ENCODE measurements at regions of chr4 and their contacts with region 1.

Region 1: DNA sequence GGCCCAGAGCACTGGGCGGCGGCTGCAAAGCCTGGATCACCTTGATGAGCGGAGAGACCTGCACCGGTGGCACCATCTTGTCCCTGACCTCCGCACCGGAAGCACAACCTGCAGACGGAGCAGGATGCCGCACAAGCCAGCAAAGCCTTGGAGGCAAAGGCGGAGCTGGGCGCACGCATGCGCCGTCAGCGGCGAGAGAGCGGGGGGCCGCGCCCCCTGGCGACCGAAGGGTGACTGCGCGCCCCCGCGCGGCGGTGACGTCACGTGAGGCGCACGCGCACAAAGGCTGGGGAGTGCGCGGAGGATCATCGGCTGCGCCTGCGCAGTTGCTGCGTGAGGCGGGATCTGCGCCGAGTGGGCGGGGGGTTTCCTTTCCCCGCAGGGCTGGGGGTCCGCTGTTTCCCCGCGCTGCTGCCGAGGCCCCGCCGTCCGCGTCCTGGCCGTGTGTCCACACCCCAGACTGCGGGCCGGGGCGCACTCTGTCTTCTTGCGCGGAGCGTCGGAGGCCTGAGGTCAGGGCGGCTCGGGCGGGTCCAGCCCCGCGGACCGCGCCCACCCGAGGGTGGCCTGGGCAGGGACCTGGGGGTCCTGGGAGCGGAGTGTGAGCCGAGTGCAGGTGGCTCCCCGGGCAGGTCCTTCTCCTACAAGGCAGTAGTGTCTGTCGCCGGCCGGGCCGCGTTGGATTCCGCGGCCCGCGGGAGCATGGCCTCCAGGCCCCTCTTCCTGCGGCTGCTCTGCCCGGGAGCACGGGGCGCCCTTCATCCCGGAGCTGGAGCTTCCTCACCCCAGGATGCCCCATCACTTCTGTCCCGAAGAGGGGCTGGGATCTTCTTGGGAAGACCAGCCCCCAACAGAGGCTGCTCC is at the starts of genes ATP5ME and MYL5:
- DNase-seq: peak; percentile 98 to 99
- ATAC-seq: peak; percentile 96
- H3K4me3 ChIP-seq: peak within 1 kb of the TSS; percentile 75 to 85
- H3K27ac ChIP-seq: peak within 1 kb of the TSS in 1 of 2 donors; percentile 35
- H3K4me1 ChIP-seq: no peaks in the 10 kb centered on the region
- H3K27me3 ChIP-seq: no peaks in the 10 kb centered on the region
- total RNA-seq, gene ATP5ME: 152 to 162 TPM
- total RNA-seq, gene MYL5: 5.7 to 11.5 TPM

Region 2: GRCh38 chr4:242121-242848 is 432.1 kb before region 1 on chr4:
- intact Hi-C with region 1: loop called in 1 of 2 experiments (anchors 5 kb)
- DNase-seq: peak; percentile 61 to 78
- ATAC-seq: peak; percentile 83
- H3K4me3 ChIP-seq: no peak overlapping the region
- H3K27ac ChIP-seq: no peak overlapping the region
- H3K4me1 ChIP-seq: no peaks in the 10 kb centered on the region
- H3K27me3 ChIP-seq: no peaks in the 10 kb centered on the region